Left cardiac atrium (tissue), 4 donors: ENCODE measurements at regions of chr5 and their contacts with region 1.

Region 1: GRCh38 chr5:164784230-164784629 is 1278.8 kb downstream of the MAT2B start:
- DNase-seq: no peak
- ATAC-seq: no peak

Region 2: GRCh38 chr5:164722702-164723101 is 61.5 kb before region 1 on chr5:
- intact Hi-C with region 1: loop called in 1 of 2 experiments (anchors 10 kb)
- DNase-seq: no peak
- ATAC-seq: no peak

Region 3: GRCh38 chr5:164735334-164735733 is 48.9 kb before region 1 on chr5:
- intact Hi-C with region 1: no loop called
- DNase-seq: no peak
- ATAC-seq: no peak